AG04450 (cell line): ENCODE measurements at regions of chr11 and their contacts with region 1.

Region 1: DNA sequence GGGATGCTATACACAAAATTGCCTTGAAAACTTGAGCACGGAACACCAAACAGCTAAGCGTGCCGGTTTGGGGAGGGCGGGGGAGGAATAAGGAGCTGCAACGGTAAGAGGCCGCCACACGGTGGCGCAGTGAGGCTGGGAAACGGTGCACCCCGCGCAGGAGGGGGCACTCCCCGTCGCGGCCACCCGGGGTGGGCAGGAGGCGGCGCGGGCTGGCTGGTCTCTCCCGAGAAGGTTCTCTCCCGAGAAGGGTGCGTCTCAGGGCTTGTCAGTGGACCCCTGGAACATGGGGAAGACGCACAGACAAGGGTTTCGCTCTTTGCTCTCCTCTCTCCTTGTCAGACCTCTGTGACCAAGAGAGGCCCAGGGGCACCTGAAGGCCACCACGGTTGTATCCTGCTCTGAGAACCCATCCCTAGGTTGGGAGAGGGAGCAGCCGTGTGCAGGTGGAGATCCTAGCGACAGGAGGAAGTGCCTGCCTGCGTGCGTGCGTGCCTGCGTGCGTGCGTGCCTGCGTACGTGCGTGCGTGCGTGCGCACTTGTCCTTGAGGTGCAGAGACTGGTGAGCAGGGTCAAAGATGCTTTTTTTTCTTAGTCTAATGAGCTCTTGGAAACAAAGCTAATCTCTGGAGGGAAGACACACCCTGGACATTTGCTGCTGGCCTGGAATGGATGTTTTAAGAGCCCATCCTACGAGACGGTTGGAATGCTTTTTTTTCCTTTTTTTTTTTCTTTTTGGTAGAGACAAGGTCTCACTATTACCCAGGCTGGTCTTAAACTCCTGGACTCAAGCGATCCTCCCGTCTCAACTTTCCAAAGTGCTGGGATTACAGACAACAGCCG is 18.1 kb upstream of the JAM3 start:
- DNase-seq: no peak
- H3K4me3 ChIP-seq: peak overlapping the region; percentile 47
- H3K27ac ChIP-seq: no peak overlapping the region
- H3K27me3 ChIP-seq: no peaks in the 10 kb centered on the region
- CTCF ChIP-seq: peak; percentile 89

Region 2: DNA sequence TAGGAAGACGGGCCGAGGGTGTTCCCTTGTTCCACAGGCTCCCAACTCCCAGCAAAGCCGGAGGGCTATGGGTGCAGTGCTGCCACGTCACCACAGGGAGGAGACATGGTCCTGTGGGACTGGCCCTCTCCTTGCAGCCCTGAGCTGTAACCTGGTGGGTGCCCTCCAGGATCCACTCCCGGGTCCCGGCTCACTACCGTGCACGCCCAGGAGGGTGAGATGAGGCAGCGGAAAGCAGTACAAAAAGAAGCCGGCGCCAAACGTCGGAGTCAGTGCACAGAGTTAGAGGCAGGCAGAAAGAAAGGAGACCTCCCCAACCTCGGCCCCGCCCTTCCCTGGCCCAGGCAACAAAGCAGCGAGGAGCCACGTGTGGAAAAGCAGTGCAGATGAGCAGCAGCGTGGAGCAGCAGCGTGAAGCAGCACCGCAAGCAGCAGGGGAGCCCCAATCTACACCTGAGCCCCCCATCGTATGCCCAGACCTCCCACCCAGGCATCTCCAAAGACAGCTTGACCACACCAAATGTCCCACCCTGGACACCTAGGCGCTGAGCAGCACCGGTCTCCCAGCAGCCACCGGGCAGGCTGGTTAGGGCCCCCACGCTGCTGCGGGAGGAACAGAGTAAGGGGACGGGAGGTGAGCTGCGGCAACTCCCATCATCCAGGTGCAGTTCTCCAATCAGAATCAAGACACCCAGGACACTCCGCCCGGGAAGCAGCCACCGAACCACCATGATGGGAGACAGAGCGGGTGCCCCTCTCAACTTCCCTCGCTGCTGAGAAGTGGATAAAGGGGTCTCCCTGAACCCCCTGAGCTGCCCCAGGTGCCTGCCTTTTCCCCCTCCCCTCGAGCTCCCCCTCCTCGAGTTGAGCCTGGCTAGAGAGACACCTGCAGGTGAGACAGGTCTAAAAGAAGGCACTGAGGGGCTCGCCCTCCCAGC is 122.8 kb before region 1 on chr11:
- CTCF ChIA-PET with region 1: interaction called, 25 read pairs
- POLR2A ChIA-PET with region 1: no interaction called
- DNase-seq: peak; percentile 11
- H3K4me3 ChIP-seq: 0 out of 2 replicates have a peak overlapping the region, but pooled peaks have one; percentile 1
- H3K27ac ChIP-seq: no peak overlapping the region
- H3K27me3 ChIP-seq: no peaks in the 10 kb centered on the region
- CTCF ChIP-seq: peak; percentile 88

Region 3: GRCh38 chr11:134062265-134063123 is 11.7 kb after region 1 on chr11:
- CTCF ChIA-PET with region 1: interaction called, 61 read pairs
- POLR2A ChIA-PET with region 1: no interaction called
- DNase-seq: no peak
- H3K4me3 ChIP-seq: no peak overlapping the region
- H3K27ac ChIP-seq: no peak overlapping the region
- H3K27me3 ChIP-seq: peaks cover 27% of the 10 kb centered on the region
- CTCF ChIP-seq: no peak

Region 4: DNA sequence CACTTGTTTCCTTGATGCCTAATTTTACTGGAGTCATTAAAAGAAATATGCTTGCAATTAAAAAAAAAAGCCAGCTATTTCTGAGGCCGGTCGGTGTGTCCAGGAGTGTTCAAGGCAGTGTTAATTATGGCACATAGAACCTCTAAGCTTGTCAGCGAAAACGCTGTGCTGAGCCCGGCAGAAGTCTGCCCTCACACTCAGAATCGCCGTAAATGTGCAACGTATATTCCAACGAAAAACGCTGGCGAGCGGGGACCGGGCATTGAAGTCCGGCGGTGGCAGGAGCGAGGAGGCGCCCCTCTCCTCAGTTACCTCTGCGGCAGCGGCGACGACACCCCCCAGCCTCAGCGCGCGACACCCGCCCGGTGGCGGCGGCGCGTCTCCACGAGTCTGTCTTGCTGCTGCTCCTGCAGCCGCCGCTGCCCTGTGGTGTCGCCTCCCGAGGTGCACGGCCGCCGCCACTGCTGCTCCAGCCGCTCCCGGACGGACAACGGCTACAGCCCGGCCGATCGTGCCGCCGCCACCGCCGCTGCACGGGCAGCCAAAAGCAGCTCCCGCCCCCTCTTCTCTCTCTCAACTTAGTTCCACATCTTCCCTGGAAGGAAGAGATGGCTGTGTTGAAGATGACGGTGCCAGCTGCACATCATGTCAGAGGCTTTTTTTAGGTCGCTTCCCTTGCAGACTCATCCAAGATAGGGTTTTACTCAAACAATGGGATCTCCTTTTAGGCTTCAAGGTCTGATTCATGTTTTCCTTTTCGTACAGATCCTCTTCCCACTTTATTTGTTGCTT is 74.1 kb after region 1 on chr11:
- CTCF ChIA-PET with region 1: interaction called, 30 read pairs
- POLR2A ChIA-PET with region 1: no interaction called
- DNase-seq: no peak
- H3K4me3 ChIP-seq: peak overlapping the region; percentile 58
- H3K27ac ChIP-seq: peak overlapping the region; percentile 74
- H3K27me3 ChIP-seq: no peaks in the 10 kb centered on the region
- CTCF ChIP-seq: no peak

Region 5: DNA sequence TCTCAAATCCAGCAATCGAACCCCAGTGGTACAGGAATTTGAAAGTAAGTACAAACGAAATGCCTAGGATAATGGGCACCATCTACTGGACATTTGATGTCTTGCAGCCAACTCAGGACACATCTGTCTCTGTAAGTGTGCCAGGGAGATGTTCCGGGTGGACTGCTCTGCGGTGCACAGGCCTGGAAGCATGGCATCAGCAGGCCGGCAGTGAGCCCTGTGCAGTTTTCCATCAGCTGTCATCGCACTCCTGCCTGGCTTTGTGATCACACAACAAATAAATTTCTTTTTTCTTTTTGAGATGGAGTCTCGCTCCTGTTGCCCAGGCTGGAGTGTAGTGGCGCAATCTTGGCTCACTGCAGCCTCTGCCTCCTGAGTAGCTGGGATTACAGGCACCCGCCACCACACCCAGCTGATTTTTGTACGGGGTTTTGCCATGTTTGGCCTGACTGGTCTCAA is 89.1 kb after region 1 on chr11:
- CTCF ChIA-PET with region 1: interaction called, 133 read pairs
- POLR2A ChIA-PET with region 1: no interaction called
- DNase-seq: peak; percentile 64
- H3K4me3 ChIP-seq: no peak overlapping the region
- H3K27ac ChIP-seq: no peak overlapping the region
- H3K27me3 ChIP-seq: no peaks in the 10 kb centered on the region
- CTCF ChIP-seq: peak; percentile 91

Region 6: DNA sequence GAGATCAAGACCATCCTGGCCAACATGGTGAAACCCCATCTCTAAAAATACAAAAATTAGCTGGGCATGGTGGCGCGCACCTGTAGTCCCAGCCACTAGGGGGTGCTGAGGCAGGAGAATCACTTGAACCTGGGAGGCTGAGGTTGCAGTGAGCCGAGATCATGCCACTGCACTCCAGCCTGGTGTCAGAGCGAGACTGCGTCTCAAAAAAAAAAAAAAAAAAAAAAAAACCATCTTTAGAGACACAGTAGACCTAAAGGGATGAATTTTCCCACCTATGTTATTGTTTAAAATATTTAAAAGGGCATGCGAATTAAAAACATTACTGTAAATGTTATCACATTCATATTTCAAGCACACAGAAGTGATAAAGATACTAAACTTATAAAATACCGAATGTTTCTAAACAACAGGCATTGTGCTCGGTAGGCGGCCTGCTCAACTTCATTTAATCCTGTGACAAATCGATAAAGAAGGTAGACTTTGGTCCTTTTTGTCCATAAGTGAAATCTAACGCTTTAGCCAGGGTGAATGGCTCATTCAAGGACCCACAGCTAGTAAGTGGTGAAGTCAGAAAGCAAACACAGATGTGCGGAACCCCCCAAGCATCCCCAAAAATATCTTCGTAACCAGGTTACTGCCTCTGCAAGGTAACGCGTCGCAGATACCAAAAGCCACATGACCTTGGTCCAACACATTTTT is 156.9 kb after region 1 on chr11:
- CTCF ChIA-PET with region 1: interaction called, 11 read pairs
- POLR2A ChIA-PET with region 1: no interaction called
- DNase-seq: no peak
- H3K4me3 ChIP-seq: no peak overlapping the region
- H3K27ac ChIP-seq: no peak overlapping the region
- H3K27me3 ChIP-seq: no peaks in the 10 kb centered on the region
- CTCF ChIP-seq: peak; percentile 63